Natural killer cell (primary cell): ENCODE measurements at regions of chr10 and their contacts with region 1.

Region 1: DNA sequence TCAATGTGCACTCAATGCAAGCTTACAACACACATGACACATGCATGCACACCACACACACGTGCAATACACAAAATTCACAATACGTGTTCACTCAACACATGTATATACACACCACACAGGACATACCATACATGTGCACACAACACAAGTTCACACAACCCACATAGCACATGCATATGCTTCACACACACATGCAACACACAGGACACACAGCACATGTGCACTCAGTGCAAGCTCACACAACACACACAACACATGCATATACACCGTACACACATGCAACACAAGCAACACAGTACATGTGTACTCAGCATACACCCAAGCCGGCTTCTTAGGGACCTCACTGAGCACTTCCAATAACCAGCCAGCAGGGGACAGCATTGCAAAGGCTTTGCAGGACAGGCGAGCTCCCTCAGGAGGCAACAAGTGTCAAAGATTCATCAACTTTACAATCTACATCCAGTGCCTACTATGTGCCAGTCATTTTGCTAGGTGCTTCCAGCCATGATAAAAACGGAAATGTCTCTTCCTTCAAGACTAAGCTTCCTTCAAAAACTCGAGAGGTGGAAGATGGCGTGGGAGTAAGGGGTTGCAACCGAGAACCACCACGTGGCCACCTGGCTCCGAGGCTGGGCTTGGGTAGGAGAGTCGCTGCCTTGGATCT is 61.1 kb downstream of the JCAD start:
- DNase-seq: peak; percentile 70 to 90
- ATAC-seq: peak; percentile 86 to 98 (median 93)
- H3K4me3 ChIP-seq: no peak overlapping the region
- H3K4me3 Mint-ChIP-seq: no peak overlapping the region
- H3K27ac ChIP-seq: no peak overlapping the region
- H3K27ac Mint-ChIP-seq: no peak overlapping the region
- H3K4me1 ChIP-seq: no peaks in the 10 kb centered on the region
- H3K4me1 Mint-ChIP-seq: peaks cover 0 to 16% of the 10 kb centered on the region in 2 donors
- H3K27me3 ChIP-seq: peaks cover 2% of the 10 kb centered on the region
- H3K27me3 Mint-ChIP-seq: peaks cover 48 to 68% of the 10 kb centered on the region in 2 donors
- CTCF ChIP-seq: peak; percentile 96

Region 2: GRCh38 chr10:30241422-30242110 is 243.3 kb after region 1 on chr10:
- intact Hi-C with region 1: loop called (anchors 1 kb)
- DNase-seq: no peak
- ATAC-seq: no peak
- H3K4me3 ChIP-seq: no peak overlapping the region
- H3K4me3 Mint-ChIP-seq: no peak overlapping the region
- H3K27ac ChIP-seq: no peak overlapping the region
- H3K27ac Mint-ChIP-seq: no peak overlapping the region
- H3K4me1 ChIP-seq: no peaks in the 10 kb centered on the region
- H3K4me1 Mint-ChIP-seq: no peaks in the 10 kb centered on the region
- H3K27me3 ChIP-seq: peaks cover 3% of the 10 kb centered on the region
- H3K27me3 Mint-ChIP-seq: peaks cover 4 to 17% of the 10 kb centered on the region in 2 donors
- CTCF ChIP-seq: no peak

Region 3: DNA sequence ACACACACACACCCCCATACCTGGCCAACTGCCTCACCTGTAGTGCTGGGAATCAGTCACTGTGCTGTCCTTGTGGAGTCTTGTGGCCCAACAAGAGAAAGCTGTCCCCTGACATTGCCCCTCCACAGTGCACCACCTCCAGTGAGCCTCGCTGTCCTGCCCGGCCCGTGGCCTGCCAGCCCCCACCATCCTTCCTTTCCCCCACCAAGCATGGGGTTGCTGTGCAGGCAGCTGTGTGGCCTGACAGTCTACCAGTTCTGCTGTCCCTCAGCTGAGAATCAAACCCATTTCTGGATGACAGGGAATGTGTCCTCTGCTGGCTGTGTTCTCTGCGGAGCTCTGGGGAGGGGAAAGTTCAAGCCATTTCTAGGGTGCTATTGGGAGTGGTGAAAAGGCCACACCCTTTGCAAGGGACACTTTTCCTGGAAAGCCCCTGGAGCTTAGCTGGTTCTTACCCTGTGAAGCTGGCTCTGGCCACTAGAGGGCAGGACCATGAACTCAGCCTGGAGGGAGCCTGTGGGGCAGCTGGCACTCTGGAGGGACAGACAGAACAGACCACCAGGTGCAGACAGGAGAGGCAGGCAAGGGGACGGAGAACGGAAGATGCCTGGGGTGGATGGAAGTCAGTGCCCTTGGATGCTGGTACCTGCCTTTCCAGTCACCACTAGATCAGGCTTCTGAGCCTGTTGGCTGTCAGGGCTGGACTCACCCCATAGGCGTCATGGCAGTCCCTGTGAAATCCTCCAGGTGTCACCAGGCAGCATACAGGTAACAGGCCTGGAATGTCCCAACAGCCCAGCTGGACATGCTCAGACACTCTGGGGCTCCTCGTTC is 361.3 kb after region 1 on chr10:
- intact Hi-C with region 1: loop called (anchors 10 kb)
- DNase-seq: peak; percentile 46 to 78
- ATAC-seq: peak; percentile 72 to 92 (median 92)
- H3K4me3 ChIP-seq: no peak overlapping the region
- H3K4me3 Mint-ChIP-seq: no peak overlapping the region
- H3K27ac ChIP-seq: no peak overlapping the region
- H3K27ac Mint-ChIP-seq: no peak overlapping the region
- H3K4me1 ChIP-seq: peaks cover 6% of the 10 kb centered on the region
- H3K4me1 Mint-ChIP-seq: peaks cover 0 to 6% of the 10 kb centered on the region in 2 donors
- H3K27me3 ChIP-seq: no peaks in the 10 kb centered on the region
- H3K27me3 Mint-ChIP-seq: peaks cover 0 to 14% of the 10 kb centered on the region in 2 donors
- CTCF ChIP-seq: peak; percentile 72

Region 4: DNA sequence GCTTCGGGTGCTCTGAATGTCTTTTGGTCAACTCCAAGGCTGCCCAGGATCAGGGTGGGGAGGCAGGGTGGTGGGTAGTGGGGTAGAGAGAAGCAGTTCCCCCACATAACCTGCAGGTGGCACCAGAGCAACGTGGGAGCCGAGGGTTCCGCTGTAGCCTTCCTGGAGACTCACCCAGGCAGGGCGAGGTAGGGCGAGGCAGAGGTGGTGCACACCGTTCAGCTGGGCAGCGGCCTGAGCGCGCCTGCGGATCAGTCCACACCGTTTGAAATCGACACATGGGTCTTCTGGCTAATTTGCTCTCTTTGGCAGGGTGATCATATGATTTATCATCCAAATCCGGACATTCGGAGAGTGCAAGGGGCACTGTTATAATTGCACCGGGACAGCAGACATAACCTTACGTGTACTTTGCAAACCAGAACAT is 394.3 kb after region 1 on chr10:
- intact Hi-C with region 1: loop called (anchors 10 kb)
- DNase-seq: peak; percentile 69 to 86
- ATAC-seq: peak; percentile 95 to 100 (median 100)
- H3K4me3 ChIP-seq: no peak overlapping the region
- H3K4me3 Mint-ChIP-seq: no peak overlapping the region
- H3K27ac ChIP-seq: no peak overlapping the region
- H3K27ac Mint-ChIP-seq: no peak overlapping the region
- H3K4me1 ChIP-seq: peaks cover 6% of the 10 kb centered on the region
- H3K4me1 Mint-ChIP-seq: peaks cover 4 to 5% of the 10 kb centered on the region in 2 donors
- H3K27me3 ChIP-seq: no peaks in the 10 kb centered on the region
- H3K27me3 Mint-ChIP-seq: peaks cover 6 to 16% of the 10 kb centered on the region in 2 donors
- CTCF ChIP-seq: peak; percentile 97